GM12878 (cell line): ENCODE measurements at regions of chr6 and their contacts with region 1.

Region 1: GRCh38 chr6:139219271-139219729 is 72.5 kb downstream of the TXLNB start:
- DNase-seq: peak; percentile 82
- ATAC-seq: peak; percentile 100
- H3K4me3 ChIP-seq: no peak overlapping the region
- H3K27ac ChIP-seq: peak overlapping the region; percentile 20; the same call in 1 of the 2 replicates
- H3K4me1 ChIP-seq: peaks cover 3% of the 10 kb centered on the region; the same call in 1 of the 2 replicates
- H3K27me3 ChIP-seq: no peaks in the 10 kb centered on the region
- CTCF ChIP-seq: peak; percentile 88 to 99 (median 93); a peak in 5 of 6 replicates
- EP300 ChIP-seq: peak in 1 of 2 experiments; percentile 25; a peak in 1 of 4 replicates
- POLR2A ChIP-seq: peak; percentile 44; the same call in 1 of the 2 replicates
- RAD21 ChIP-seq: peak; percentile 99

Region 2: DNA sequence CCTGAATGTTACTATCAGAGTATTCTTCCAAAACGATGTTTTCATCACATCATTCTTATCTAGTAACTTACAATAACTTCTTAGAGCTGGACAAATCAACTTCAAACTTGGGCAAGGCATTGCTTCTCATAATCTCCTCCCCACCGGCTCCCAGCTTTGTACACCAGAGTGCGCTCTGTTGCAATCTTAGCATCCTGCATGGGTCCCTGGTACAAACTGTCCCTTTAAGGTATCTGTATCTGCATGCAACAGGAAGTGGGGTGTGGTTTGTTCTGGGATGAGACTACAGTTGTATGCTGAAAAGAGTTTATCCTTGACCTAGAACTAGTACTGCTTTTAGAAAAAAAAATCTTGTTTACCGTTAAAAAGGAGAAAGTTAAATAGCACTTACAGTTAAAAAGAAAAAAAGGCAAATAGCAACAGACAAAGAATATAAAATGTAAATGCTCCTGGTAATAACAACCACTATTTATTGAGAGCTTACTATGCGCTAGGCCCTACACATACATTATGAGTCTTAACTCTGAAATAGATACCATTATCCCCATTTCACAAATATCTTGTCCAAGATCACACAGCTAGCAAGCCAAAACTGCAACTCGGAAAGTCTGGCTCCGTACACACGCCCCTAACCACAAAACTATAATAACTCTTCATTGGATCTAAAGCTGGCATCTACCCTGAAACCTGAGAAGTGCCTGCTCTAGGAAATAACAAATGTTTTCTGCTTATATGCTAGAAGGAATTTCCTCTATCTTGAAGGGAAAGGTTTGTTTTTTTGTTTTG is 94.2 kb before region 1 on chr6:
- CTCF ChIA-PET with region 1: interaction called, 51 read pairs
- POLR2A ChIA-PET with region 1: no interaction called
- RAD21 ChIA-PET with region 1: interaction called, 16 read pairs
- SMC1A ChIA-PET with region 1: interaction called, 30 read pairs
- in situ Hi-C with region 1: no loop called
- intact Hi-C with region 1: loop called (anchors 1 kb)
- DNase-seq: peak; percentile 54
- ATAC-seq: peak; percentile 100
- H3K4me3 ChIP-seq: no peak overlapping the region
- H3K27ac ChIP-seq: no peak overlapping the region
- H3K4me1 ChIP-seq: peaks cover 4% of the 10 kb centered on the region; the same call in 1 of the 2 replicates
- H3K27me3 ChIP-seq: no peaks in the 10 kb centered on the region
- CTCF ChIP-seq: peak; percentile 51 to 75 (median 66); a peak in 5 of 6 replicates
- EP300 ChIP-seq: 0 out of 4 replicates have a peak, but pooled peaks of 1 of the 2 experiments have one; percentile 41
- POLR2A ChIP-seq: no peak
- RAD21 ChIP-seq: peak; percentile 78

Region 3: DNA sequence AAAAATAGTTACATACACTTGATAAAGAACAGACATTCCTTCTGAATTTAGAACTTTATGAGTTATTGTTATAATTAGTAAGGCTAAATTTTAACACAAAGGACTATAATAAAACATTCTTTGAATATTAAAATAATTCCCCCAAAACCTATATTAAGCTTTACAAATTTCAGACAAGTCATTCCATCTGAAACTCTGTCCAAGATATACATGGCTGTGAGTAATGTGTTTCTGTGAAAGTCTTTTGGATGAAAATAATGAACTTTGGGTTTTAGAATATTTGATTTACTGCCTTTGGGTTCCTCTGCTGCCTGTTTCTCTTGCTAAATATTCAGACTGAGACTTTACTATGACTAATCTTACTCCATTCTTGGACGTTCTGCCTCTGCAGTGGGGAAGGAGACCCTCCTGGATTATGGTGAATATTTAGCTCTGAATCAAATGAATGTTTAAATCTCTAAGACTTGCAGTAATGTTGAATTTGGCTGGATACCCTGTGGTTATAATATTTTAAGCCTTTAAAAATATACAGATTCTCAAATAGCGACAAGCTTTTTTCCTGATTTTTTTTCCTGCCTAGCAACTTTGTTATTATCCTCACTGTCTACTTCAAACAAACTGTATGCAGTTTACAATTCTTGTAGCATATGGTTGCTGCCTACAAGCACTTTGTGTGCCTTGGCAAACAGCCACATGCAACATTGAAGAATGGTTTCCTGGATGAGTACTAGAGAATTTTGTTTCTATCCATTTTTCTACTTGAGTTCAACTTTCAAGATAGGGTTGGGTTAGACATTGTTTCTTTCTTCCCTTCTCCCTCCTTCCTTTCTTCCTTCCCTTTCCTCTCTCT is 21.1 kb after region 1 on chr6:
- CTCF ChIA-PET with region 1: interaction called, 11 read pairs
- POLR2A ChIA-PET with region 1: no interaction called
- RAD21 ChIA-PET with region 1: interaction called, 6 read pairs
- SMC1A ChIA-PET with region 1: interaction called, 6 read pairs
- in situ Hi-C with region 1: no loop called
- intact Hi-C with region 1: no loop called
- DNase-seq: no peak
- ATAC-seq: no peak
- H3K4me3 ChIP-seq: no peak overlapping the region
- H3K27ac ChIP-seq: no peak overlapping the region
- H3K4me1 ChIP-seq: no peaks in the 10 kb centered on the region
- H3K27me3 ChIP-seq: no peaks in the 10 kb centered on the region
- CTCF ChIP-seq: no peak
- EP300 ChIP-seq: no peak
- POLR2A ChIP-seq: no peak
- RAD21 ChIP-seq: no peak

Region 4: DNA sequence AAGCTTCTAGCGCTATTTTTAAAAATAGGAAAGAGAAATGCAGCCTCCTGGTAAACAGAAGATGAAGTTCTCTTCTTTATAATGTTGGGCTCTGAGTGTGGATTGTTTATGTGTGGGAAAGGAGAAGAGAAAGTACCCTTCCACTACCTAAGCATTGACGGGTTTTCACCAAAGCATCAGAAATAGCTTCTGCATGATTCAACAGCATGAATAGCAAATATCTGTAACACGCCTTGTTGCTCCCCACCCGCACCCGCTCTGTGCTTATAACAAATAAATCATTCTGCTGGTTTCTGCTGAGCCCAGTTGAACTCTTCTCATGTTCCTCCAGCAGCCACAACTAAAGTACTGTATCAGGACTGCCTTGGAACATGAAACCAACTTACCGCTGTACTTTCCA is 51.8 kb after region 1 on chr6:
- CTCF ChIA-PET with region 1: interaction called, 10 read pairs
- POLR2A ChIA-PET with region 1: no interaction called
- RAD21 ChIA-PET with region 1: interaction called, 25 read pairs
- SMC1A ChIA-PET with region 1: interaction called, 23 read pairs
- in situ Hi-C with region 1: no loop called
- intact Hi-C with region 1: no loop called
- DNase-seq: no peak
- ATAC-seq: peak; percentile 92
- H3K4me3 ChIP-seq: 0 out of 2 replicates have a peak overlapping the region, but pooled peaks have one; percentile 18
- H3K27ac ChIP-seq: peak overlapping the region; percentile 14; the same call in 1 of the 2 replicates
- H3K4me1 ChIP-seq: peaks cover 6% of the 10 kb centered on the region
- H3K27me3 ChIP-seq: no peaks in the 10 kb centered on the region
- CTCF ChIP-seq: no peak
- EP300 ChIP-seq: 0 out of 4 replicates have a peak, but pooled peaks of 1 of the 2 experiments have one; percentile 31
- POLR2A ChIP-seq: no peak
- RAD21 ChIP-seq: no peak

Region 5: GRCh38 chr6:139334806-139335446 is 115.6 kb after region 1 on chr6:
- CTCF ChIA-PET with region 1: interaction called, 8 read pairs
- POLR2A ChIA-PET with region 1: interaction called, 3 read pairs
- RAD21 ChIA-PET with region 1: interaction called, 16 read pairs
- SMC1A ChIA-PET with region 1: interaction called, 60 read pairs
- in situ Hi-C with region 1: no loop called
- intact Hi-C with region 1: no loop called
- DNase-seq: no peak
- ATAC-seq: no peak
- H3K4me3 ChIP-seq: no peak overlapping the region
- H3K27ac ChIP-seq: no peak overlapping the region
- H3K4me1 ChIP-seq: peaks cover 7% of the 10 kb centered on the region; the same call in 1 of the 2 replicates
- H3K27me3 ChIP-seq: no peaks in the 10 kb centered on the region
- CTCF ChIP-seq: no peak
- EP300 ChIP-seq: no peak
- POLR2A ChIP-seq: no peak
- RAD21 ChIP-seq: no peak